H1 (cell line): ENCODE measurements at regions of chr10 and their contacts with region 1.

Region 1: GRCh38 chr10:101782811-101783735 is at the start of gene NPM3:
- DNase-seq: peak in 1 of 2 experiments; percentile 91
- H3K4me3 ChIP-seq: peak within 1 kb of the TSS; percentile 84 to 91 (median 88)
- H3K27ac ChIP-seq: peak within 1 kb of the TSS; percentile 50; the same call in 1 of the 2 replicates
- H3K4me1 ChIP-seq: peaks cover 4 to 33% (median 20%) of the 10 kb centered on the region in 4 experiments
- H3K27me3 ChIP-seq: peaks cover 5 to 18% (median 13%) of the 10 kb centered on the region in 4 experiments
- CTCF ChIP-seq: no peak
- EP300 ChIP-seq: no peak
- POLR2A ChIP-seq: peak in 1 of 2 experiments; percentile 67; a peak in 2 of 3 replicates
- RAD21 ChIP-seq: no peak
- total RNA-seq, gene NPM3: 175 and 177 TPM in 2 replicates

Region 2: GRCh38 chr10:101576211-101576863 is 206.7 kb before region 1 on chr10:
- CTCF ChIA-PET with region 1: interaction called, 31 read pairs
- POLR2A ChIA-PET with region 1: no interaction called
- DNase-seq: no peak
- H3K4me3 ChIP-seq: no peak overlapping the region
- H3K27ac ChIP-seq: no peak overlapping the region
- H3K4me1 ChIP-seq: peaks cover 3 to 9% (median 8%) of the 10 kb centered on the region in 4 experiments
- H3K27me3 ChIP-seq: peaks cover 2 to 21% (median 14%) of the 10 kb centered on the region in 4 experiments; a peak in 6 of 7 replicates
- CTCF ChIP-seq: no peak
- EP300 ChIP-seq: no peak
- POLR2A ChIP-seq: no peak
- RAD21 ChIP-seq: no peak

Region 3: DNA sequence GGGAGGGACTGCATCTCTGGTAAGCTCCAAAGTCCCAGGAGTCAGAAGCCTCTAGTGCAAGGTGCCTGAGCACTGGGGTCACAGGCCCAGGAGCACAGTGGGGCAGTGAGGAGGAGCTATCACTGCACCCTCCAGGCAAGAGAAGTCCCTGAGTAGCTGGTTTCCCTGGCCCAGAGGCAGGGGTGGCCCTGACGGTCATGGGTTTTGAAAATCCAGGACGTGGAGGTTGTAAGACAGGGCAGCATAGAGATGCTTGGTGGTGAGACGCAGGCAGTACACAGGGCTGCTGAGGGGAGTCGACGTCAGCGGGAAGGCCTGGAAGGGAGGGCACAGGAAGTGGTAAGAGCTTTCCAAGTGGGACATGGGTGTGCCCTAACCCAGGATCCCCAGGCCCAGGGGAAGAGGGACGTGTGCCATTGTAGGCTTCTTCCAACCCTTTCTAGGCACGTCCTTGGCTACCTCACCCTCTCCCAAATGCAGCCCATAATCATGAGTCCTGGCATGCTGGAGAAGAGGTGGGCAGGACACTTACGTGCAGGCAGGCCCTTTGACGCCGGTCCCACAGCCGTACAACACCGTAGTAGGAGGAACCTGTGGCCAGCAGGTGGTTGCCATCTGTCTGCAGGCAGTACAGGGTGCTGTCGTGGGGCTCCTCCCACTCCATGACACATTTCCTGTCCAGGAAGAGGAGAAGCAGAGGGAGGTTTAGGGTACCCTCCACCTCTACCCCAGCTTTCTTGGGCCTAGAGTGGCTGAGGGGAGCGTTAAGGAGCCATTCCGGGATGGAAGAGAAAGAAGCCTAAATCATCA is 171.8 kb before region 1 on chr10:
- CTCF ChIA-PET with region 1: interaction called, 246 read pairs
- POLR2A ChIA-PET with region 1: interaction called, 3 read pairs
- DNase-seq: no peak
- H3K4me3 ChIP-seq: no peak overlapping the region
- H3K27ac ChIP-seq: no peak overlapping the region
- H3K4me1 ChIP-seq: peaks cover 8 to 26% (median 16%) of the 10 kb centered on the region in 4 experiments
- H3K27me3 ChIP-seq: no peaks in the 10 kb centered on the region
- CTCF ChIP-seq: no peak
- EP300 ChIP-seq: no peak
- POLR2A ChIP-seq: no peak
- RAD21 ChIP-seq: no peak

Region 4: GRCh38 chr10:101693978-101694673 is 88.9 kb before region 1 on chr10:
- CTCF ChIA-PET with region 1: interaction called, 17 read pairs
- POLR2A ChIA-PET with region 1: interaction called, 3 read pairs
- DNase-seq: no peak
- H3K4me3 ChIP-seq: peak overlapping the region; percentile 74 to 93 (median 81)
- H3K27ac ChIP-seq: peak overlapping the region; percentile 95
- H3K4me1 ChIP-seq: peaks cover 3 to 12% (median 3%) of the 10 kb centered on the region in 4 experiments; a peak in 5 of 7 replicates
- H3K27me3 ChIP-seq: no peaks in the 10 kb centered on the region
- CTCF ChIP-seq: no peak
- EP300 ChIP-seq: no peak
- POLR2A ChIP-seq: peak; percentile 74 to 86
- RAD21 ChIP-seq: no peak

Region 5: GRCh38 chr10:101759309-101760247 is 23.5 kb before region 1 on chr10:
- CTCF ChIA-PET with region 1: interaction called, 33 read pairs
- POLR2A ChIA-PET with region 1: interaction called, 11 read pairs
- DNase-seq: peak in 1 of 2 experiments; percentile 63
- H3K4me3 ChIP-seq: no peak overlapping the region
- H3K27ac ChIP-seq: no peak overlapping the region
- H3K4me1 ChIP-seq: peaks cover 0 to 9% (median 7%) of the 10 kb centered on the region in 4 experiments; a peak in 6 of 7 replicates
- H3K27me3 ChIP-seq: peaks cover 0 to 5% (median 4%) of the 10 kb centered on the region in 4 experiments; a peak in 3 of 7 replicates
- CTCF ChIP-seq: no peak
- EP300 ChIP-seq: no peak
- POLR2A ChIP-seq: no peak
- RAD21 ChIP-seq: no peak

Region 6: DNA sequence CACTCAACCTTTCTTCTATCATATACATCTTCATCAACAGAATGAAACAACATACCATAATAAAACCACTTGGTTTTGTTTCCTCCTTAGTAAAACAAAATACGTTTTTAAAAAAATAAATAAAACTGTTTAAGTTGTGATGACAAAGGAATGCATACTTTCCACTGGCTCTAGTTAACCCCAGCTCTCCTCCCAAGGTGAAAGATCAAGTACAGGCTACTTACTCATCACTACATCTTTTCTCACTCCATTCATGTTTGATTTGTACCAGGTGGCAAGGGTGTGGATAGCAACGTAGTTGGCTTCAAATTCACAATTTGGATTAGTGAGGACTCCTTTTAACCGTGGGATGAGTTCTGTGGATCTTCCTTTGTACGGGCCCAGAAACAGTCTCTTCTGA is 20.4 kb after region 1 on chr10:
- CTCF ChIA-PET with region 1: interaction called, 8 read pairs
- POLR2A ChIA-PET with region 1: interaction called, 30 read pairs
- DNase-seq: no peak
- H3K4me3 ChIP-seq: no peak overlapping the region
- H3K27ac ChIP-seq: no peak overlapping the region
- H3K4me1 ChIP-seq: no peaks in the 10 kb centered on the region
- H3K27me3 ChIP-seq: no peaks in the 10 kb centered on the region
- CTCF ChIP-seq: no peak
- EP300 ChIP-seq: no peak
- POLR2A ChIP-seq: no peak
- RAD21 ChIP-seq: no peak